Activated CD4-positive, alpha-beta T cell treated with anti-CD3 and anti-CD28 coated beads, Interleukin-2, amount 10 ng/mL, durations not matched to agents 24 days and 14 days (primary cell): ENCODE measurements at regions of chr5 and their contacts with region 1.

Region 1: GRCh38 chr5:143222287-143223231 is 180.9 kb downstream of the NR3C1 start:
- DNase-seq: peak; percentile 87
- H3K4me3 Mint-ChIP-seq: peak overlapping the region; percentile 71
- H3K27ac Mint-ChIP-seq: peak overlapping the region; percentile 95
- H3K4me1 Mint-ChIP-seq: peaks cover 56% of the 10 kb centered on the region
- H3K27me3 Mint-ChIP-seq: no peaks in the 10 kb centered on the region

Region 2: DNA sequence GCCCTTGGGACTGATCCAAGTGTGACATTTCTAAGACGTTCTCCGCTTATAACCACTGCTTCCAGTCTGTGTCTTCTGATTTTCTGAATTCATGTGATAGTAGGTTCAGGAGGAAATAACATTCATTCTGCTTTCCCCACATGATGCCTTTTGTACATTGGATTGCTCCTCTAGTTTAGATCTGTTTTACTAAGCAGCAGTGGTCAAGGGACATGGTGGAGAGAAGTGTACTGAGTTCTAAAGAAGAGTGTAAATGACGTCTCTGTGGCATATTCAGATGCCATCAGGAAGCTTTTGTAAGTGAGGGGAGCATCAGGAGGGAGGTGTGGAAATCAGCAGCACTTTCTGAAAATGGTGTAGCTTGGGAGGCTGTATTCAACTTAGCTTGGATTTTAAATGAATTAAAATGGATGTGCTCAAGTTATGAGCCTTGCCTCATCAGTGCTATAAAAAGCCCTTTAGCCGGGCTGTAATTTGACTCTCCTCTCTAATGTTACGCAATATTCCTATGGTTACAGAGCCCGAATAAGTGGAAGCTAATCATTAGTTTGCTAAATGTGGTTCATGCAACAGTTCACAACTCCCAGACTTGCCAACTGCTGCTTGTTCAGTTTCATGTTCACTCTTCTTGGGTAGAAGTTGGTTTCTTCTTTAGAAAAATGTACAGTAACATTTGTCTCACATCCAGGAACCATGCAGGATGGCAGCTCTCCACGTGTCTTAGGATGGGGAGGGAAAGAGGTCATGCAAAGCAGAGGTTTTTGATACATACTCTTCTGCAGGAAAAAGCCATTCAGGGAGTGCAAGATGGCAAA is 171.1 kb before region 1 on chr5:
- intact Hi-C with region 1: loop called (anchors 2 kb)
- DNase-seq: no peak
- H3K4me3 Mint-ChIP-seq: no peak overlapping the region
- H3K27ac Mint-ChIP-seq: peak overlapping the region; percentile 70
- H3K4me1 Mint-ChIP-seq: peaks cover 62% of the 10 kb centered on the region
- H3K27me3 Mint-ChIP-seq: no peaks in the 10 kb centered on the region

Region 3: DNA sequence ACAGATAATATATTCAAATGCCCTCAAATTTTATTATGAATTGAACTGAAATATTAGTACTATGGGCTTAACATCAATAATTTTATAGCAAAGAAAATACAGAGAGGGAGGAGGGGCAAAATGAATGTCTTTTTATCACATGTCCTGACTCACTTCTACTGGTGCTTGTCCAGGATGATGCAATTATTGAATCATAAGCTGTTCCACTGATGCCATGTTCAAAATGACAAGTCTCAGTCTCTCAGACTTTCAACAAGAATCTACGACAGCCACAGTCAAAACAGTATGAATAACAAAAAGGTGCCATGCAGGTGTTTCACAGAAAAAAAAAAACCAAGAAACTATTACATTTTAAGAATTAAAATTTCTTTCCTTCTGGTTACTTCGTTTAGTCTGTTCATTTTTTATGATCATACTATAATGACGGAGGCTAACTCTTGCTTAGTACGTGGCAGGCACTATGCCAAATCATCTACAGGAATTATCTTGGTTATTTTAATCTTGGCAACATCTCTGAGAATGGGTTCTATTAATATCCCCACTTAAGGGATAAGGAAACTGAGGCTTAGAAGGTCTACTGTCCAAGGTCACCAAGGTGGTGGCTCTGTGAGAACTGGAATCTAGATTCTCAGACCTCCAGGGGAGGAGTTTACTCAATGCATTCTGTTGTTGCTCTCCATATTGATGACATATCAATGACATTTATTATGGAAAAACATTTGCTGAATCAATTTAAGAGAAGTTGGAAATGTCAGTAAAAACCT is 119.4 kb after region 1 on chr5:
- intact Hi-C with region 1: no loop called
- DNase-seq: no peak
- H3K4me3 Mint-ChIP-seq: no peak overlapping the region
- H3K27ac Mint-ChIP-seq: no peak overlapping the region
- H3K4me1 Mint-ChIP-seq: peaks cover 26% of the 10 kb centered on the region
- H3K27me3 Mint-ChIP-seq: no peaks in the 10 kb centered on the region